OCI-LY7 (cell line): ENCODE measurements at regions of chr7 and their contacts with region 1.

Region 1: DNA sequence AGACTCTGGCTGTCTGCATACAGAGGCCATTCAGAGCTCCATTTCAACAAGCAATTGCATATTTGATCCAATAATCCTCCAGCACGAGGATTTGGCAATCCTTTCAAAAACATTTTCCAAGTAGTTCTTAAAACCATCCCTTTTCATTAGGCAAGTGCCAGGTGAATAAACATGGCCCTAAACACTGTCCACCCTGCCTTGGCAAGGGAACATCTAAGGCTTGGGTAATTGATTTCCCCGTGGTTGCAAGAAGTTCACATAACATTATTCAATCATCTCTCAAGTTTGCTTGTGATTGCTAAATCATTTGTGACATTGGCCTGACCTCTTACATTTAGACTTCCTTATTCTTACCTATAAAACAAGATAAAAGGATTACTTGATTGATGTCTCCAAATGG is 175.2 kb downstream of the CTTNBP2 start:
- DNase-seq: no peak
- H3K4me3 ChIP-seq: no peak overlapping the region
- H3K27ac ChIP-seq: no peak overlapping the region
- H3K4me1 ChIP-seq: no peaks in the 10 kb centered on the region
- CTCF ChIP-seq: no peak

Region 2: DNA sequence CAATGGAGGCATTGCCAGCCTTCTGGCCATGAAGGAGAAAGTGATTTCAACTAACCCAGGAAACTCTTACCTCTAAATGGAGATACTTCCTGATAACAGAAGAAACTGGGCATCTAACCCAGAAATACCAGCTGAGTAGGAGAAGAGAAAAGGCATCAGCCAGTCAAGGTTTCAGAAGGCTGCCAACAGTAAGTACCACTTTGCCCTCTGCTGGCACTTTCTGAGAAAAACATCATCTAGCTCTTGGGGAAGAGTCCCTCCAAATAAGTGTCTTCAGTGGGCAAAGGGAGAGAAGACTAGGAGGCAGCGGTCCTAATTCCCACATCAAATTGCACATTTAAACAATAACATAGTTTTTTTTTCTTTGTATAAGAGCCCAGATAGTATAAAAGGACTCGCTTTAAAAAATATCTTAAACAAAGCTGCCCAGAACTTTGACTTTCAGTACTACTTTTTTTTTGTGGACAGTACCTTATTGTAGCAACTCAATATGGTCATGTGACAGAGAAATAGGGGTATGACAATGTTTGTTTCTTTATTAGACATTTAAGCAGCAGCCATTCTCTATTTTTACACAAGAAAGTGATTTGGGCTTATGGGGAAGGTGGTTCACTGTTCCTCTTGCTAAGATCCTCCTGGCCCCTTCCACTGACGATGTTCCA is 17.9 kb after region 1 on chr7:
- CTCF ChIA-PET with region 1: no interaction called
- POLR2A ChIA-PET with region 1: no interaction called
- intact Hi-C with region 1: loop called (anchors 1 kb)
- DNase-seq: peak; percentile 40
- H3K4me3 ChIP-seq: no peak overlapping the region
- H3K27ac ChIP-seq: no peak overlapping the region
- H3K4me1 ChIP-seq: no peaks in the 10 kb centered on the region
- CTCF ChIP-seq: peak; percentile 72